H1 (cell line): ENCODE measurements at regions of chr6 and their contacts with region 1.

Region 1: GRCh38 chr6:43489277-43490072 is 12.1 kb downstream of the TJAP1 start:
- DNase-seq: no peak
- H3K4me3 ChIP-seq: no peak overlapping the region
- H3K27ac ChIP-seq: no peak overlapping the region
- H3K4me1 ChIP-seq: peaks cover 3 to 10% (median 6%) of the 10 kb centered on the region in 4 experiments; a peak in 3 of 7 replicates
- H3K27me3 ChIP-seq: no peaks in the 10 kb centered on the region
- CTCF ChIP-seq: no peak
- EP300 ChIP-seq: no peak
- POLR2A ChIP-seq: no peak
- RAD21 ChIP-seq: no peak

Region 2: DNA sequence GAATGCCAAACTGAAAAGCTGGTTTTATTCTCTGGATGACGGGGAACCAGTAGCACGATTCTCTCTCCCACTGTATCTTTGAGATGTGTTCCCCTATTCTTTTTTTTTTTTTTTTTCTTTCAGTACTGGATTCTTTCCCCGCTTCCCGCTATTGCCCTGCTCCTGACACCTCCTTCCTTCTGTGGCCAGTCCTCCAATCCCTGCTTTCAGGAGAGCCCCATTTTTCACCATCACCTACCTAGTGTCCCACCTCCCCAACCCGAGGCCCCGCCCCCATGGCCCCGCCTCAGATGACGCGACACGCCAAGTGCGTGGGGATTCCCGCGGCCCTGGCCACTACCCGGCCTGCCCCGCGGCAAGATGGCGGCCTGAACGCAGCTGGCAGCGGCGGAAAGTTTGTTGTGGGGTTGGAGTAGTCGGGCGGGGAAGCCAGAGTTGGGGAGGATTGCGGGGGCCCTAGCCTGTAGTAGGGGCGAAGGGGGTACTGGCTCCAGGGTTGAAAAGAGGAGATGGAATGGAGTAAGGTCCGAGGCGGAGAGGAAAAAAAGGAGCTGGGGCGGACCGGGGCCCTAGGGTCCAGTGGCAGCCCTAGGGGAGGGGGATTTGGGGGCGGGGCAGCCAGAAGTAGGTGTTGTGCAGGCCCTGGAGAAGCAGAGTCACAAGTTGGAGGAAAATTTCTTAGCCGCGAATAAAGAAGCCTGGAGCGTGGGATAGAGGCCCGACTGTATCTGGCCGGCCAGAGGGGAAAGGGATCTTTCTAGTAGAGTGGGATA is 12.1 kb before region 1 on chr6 and contains the start of gene TJAP1:
- CTCF ChIA-PET with region 1: interaction called, 536 read pairs
- POLR2A ChIA-PET with region 1: interaction called, 19 read pairs
- DNase-seq: peak; percentile 67 to 100
- H3K4me3 ChIP-seq: peak within 1 kb of the TSS; percentile 43 to 79 (median 57)
- H3K27ac ChIP-seq: peak within 1 kb of the TSS; percentile 70
- H3K4me1 ChIP-seq: peaks cover 4 to 14% (median 12%) of the 10 kb centered on the region in 4 experiments; a peak in 6 of 7 replicates
- H3K27me3 ChIP-seq: no peaks in the 10 kb centered on the region
- CTCF ChIP-seq: no peak
- EP300 ChIP-seq: peak in 1 of 2 experiments; percentile 69; a peak in 2 of 3 replicates
- POLR2A ChIP-seq: peak; percentile 92 to 97
- RAD21 ChIP-seq: no peak
- total RNA-seq, gene TJAP1: 36.8 and 40.4 TPM in 2 replicates

Region 3: DNA sequence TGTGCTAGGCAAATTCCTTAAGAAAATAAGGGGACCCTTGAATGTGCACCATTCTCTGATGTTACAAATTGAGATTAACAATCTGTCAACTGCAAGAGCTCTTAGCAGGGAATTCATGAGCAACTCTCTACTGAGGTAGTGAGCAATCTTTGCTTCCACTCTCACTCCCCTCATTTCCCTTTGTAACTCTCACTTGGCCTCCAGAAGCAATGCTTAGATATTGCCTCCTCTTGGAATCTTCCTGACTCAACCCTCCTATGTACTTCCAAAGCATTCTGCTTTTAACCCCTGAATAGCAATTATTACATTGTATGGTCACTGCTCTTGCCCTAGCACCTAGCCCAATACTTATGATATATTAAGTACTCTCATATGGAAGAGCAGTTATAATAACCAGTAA is 69.9 kb after region 1 on chr6:
- CTCF ChIA-PET with region 1: no interaction called
- POLR2A ChIA-PET with region 1: no interaction called
- DNase-seq: no peak
- H3K4me3 ChIP-seq: no peak overlapping the region
- H3K27ac ChIP-seq: no peak overlapping the region
- H3K4me1 ChIP-seq: no peaks in the 10 kb centered on the region
- H3K27me3 ChIP-seq: no peaks in the 10 kb centered on the region
- CTCF ChIP-seq: no peak
- EP300 ChIP-seq: no peak
- POLR2A ChIP-seq: no peak
- RAD21 ChIP-seq: no peak

Region 4: GRCh38 chr6:43584892-43585570 is 95.6 kb after region 1 on chr6:
- CTCF ChIA-PET with region 1: no interaction called
- POLR2A ChIA-PET with region 1: no interaction called
- DNase-seq: no peak
- H3K4me3 ChIP-seq: no peak overlapping the region
- H3K27ac ChIP-seq: no peak overlapping the region
- H3K4me1 ChIP-seq: no peaks in the 10 kb centered on the region
- H3K27me3 ChIP-seq: no peaks in the 10 kb centered on the region
- CTCF ChIP-seq: no peak
- EP300 ChIP-seq: no peak
- POLR2A ChIP-seq: no peak
- RAD21 ChIP-seq: no peak